SK-N-SH (cell line): ENCODE measurements at regions of chr14 and their contacts with region 1.

Region 1: DNA sequence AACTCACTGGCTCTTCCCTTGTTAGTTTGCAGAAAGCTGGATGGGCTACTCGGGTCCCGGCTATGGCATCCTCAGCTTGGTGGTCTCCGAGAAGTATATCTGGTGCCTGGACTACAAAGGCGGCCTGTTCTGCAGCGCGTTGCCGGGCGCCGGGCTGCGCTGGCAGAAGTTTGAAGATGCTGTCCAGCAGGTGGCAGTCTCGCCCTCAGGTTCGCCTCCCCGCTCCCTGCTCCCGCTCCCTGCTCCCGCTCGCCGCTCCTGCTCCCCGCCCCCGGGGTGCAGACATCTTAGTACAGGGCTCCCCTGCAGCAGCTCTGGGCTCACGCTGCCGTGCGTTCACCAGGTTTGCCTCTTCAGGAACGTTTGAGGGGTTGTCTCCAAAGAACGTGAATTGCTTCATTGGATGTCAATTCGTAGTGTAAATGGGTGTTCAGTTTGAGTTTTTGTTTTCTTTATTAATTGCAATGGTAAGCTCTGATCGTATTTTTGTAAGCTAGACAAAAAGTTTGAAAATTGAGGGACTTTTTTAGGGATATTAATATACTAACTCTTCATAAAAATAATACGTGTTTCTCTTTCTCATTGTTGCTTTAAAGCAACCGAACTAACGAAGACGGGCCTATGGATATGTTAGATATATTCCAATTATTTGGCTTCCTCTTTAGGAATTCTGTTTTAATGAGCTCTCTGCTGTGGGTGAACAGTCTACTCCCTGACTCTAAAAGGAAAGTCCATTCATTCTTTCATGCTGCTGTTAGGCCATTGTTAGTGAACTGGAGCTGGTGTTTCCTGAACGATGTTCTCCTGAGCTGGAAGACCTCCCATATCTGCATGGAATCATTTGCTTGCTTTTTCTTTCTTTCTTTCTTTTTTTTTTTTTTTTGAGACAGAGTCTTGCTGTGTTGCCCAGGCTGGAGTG is 71.3 kb downstream of the ANKRD9 start:
- DNase-seq: peak; percentile 94
- H3K4me3 ChIP-seq: peak overlapping the region; percentile 5 to 10; a peak in 2 of 4 replicates
- H3K27ac ChIP-seq: no peak overlapping the region
- H3K4me1 ChIP-seq: peaks cover 0 to 2% of the 10 kb centered on the region in 2 experiments; a peak in 1 of 4 replicates
- H3K27me3 ChIP-seq: no peaks in the 10 kb centered on the region
- CTCF ChIP-seq: peak; percentile 75
- EP300 ChIP-seq: no peak
- RAD21 ChIP-seq: peak; percentile 84

Region 2: GRCh38 chr14:102451061-102451350 is 12.8 kb after region 1 on chr14:
- CTCF ChIA-PET with region 1: interaction called, 21 read pairs
- POLR2A ChIA-PET with region 1: no interaction called
- DNase-seq: no peak
- H3K4me3 ChIP-seq: no peak overlapping the region
- H3K27ac ChIP-seq: no peak overlapping the region
- H3K4me1 ChIP-seq: no peaks in the 10 kb centered on the region
- H3K27me3 ChIP-seq: no peaks in the 10 kb centered on the region
- CTCF ChIP-seq: no peak
- EP300 ChIP-seq: no peak
- RAD21 ChIP-seq: no peak

Region 3: DNA sequence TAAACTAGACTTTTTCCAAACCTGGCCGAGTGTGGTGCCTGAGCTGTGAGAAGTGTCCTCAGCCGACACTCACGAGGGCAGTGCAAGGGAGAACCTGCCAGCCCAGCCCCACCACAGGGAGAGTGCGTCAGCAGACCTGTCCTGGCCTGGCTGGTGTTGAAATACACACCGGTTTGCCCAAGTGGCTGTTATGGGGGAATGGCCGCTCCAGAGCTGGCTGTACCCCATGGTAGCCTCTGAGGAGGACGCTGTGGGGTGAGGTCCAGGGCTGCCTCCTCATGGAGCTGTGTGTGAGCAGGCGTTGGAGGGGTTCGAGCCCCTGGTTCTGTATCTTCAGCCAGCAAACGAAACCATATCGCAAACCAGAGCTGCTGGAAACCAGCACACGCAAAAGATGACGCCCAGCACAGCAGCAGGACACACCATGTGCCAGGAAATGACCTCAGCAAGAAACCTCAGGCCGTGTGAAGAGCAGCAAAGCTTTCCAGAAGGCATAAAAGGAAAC is 62.0 kb after region 1 on chr14:
- CTCF ChIA-PET with region 1: interaction called, 14 read pairs
- POLR2A ChIA-PET with region 1: no interaction called
- DNase-seq: no peak
- H3K4me3 ChIP-seq: no peak overlapping the region
- H3K27ac ChIP-seq: 0 out of 4 replicates have a peak overlapping the region, but pooled peaks of 1 of the 2 experiments have one; percentile 18
- H3K4me1 ChIP-seq: peaks cover 0 to 4% of the 10 kb centered on the region in 2 experiments; a peak in 1 of 4 replicates
- H3K27me3 ChIP-seq: no peaks in the 10 kb centered on the region
- CTCF ChIP-seq: no peak
- EP300 ChIP-seq: no peak
- RAD21 ChIP-seq: no peak

Region 4: DNA sequence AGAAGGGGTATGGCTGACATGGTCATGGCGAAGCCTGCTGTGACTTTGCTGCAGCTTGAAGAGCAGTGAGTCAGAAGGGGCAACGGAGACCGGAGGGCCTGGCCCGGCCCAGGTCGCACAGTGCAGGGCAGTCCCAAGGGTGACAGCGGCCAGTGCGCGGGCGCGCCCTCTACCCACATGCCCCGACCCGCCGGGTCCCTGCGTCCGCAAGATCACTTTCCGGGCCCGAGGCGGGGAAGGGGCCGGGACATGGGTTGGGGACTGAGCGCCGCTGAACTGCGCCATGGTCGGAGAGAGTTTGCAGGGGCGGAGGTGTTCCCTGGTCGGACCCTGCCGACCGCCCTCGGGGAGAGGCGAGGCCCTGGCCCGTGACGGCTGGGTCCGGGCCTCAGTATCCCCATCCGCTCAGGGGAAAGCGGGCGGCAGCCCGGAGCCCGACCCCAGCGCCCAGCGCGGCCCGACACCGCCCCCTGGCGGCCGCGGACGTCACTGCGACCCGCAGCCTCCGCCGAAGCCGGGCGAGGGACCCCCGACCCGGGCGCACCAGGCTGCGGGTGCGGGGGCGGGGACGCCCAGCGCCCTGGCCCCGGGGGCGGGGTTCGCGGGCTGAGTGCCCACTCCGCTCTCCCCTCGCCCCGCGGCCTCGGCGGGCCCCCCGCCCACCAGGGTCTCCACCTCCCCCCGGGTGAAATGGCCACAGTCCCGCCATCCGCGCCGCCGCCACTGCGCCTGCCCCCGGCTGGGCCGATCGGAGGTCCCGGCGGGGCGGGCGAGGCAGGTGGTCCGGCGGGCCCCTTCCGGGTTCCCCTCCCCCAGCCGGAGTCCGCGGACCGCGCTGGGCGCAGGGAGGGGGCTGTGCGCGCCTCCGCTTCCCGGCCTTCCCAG is 78.5 kb after region 1 on chr14:
- CTCF ChIA-PET with region 1: interaction called, 75 read pairs
- POLR2A ChIA-PET with region 1: no interaction called
- DNase-seq: peak; percentile 97
- H3K4me3 ChIP-seq: peak overlapping the region; percentile 63 to 66
- H3K27ac ChIP-seq: no peak overlapping the region; a peak in 1 of 4 replicates
- H3K4me1 ChIP-seq: peaks cover 0 to 4% of the 10 kb centered on the region in 2 experiments; a peak in 1 of 4 replicates
- H3K27me3 ChIP-seq: no peaks in the 10 kb centered on the region
- CTCF ChIP-seq: peak; percentile 64
- EP300 ChIP-seq: no peak
- RAD21 ChIP-seq: peak; percentile 75